Activated CD4-positive, alpha-beta memory T cell treated with anti-CD3 and anti-CD28 coated beads for 36 hours (primary cell): ENCODE measurements at regions of chr16 and their contacts with region 1.

Region 1: DNA sequence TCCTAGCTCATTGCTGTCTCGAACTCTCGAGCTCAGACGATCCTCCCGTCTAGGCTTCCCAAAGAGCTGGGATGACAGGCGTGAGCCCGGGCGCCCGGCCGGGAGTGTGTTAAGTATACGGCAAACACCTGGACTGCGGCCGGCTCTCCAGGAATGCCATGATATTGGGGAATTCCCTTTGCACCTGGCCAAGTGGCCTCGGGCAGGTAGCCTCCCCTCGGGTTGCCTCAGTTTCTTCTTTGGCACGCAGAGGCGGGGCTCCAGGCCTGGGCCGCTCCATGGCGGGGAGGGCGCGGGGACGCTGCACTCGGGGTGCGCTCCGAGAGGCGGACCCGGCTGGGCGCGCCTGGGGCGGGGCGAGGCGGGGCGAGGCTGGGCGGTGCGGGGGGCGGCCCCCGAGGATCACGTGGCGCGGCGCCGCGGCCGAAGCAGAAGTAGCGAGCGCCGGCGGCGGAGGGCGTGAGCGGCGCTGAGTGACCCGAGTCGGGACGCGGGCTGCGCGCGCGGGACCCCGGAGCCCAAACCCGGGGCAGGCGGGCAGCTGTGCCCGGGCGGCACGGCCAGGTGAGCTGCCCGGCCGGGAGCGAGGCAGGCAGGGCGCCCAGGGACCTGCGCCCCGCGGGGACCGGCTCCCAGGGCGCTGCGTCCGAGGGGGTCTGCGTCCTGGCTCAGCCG is at the start of gene PLCG2:
- DNase-seq: peak; percentile 82
- H3K4me3 Mint-ChIP-seq: peak within 1 kb of the TSS; percentile 73
- H3K27ac Mint-ChIP-seq: no peak within 1 kb of the TSS
- H3K4me1 Mint-ChIP-seq: peaks cover 10% of the 10 kb centered on the region
- H3K27me3 Mint-ChIP-seq: peaks cover 36% of the 10 kb centered on the region
- total RNA-seq, gene PLCG2: 8.3 to 10.6 TPM

Region 2: DNA sequence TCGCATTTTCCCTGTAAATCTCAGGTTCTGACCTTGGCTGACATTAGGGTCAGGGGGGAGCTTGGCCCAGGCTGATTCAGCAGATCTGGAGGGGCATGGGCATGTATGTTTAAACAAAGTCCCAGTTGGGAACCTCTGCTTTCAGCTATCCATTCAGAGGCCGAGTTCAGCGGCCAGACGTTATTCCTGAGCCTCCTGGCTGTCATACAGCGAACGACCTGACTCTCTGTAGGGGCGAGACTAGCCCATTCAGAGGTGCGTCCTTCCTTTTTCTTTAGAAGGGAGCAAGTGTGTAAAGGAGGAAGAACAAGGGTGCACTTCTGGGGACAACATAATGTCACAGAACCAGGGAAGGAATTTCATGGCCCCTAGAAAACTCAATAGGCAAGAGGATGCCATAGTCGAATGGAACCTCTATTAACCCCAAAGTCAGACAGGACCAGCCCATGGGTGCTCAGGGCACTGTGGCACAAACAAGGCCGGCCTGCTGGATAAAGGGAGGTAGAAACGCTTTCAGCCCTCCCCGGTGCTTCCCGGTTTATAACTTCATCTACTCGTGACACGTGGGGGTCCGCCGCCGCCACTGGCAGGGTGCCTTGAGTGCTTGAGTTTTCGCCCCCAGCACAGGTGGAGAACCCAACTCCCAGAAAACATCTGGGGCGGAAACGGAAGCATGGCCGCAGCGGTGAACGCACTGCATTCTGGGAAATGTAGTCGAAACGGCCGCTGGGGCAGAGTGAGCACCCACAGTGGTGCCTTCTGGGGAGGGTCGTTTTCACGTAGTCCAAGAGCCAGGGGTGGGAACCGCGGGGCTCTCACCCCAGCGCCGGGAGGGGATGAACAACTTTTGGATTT is 33.1 kb before region 1 on chr16:
- CTCF ChIA-PET with region 1: no interaction called
- POLR2A ChIA-PET with region 1: no interaction called
- intact Hi-C with region 1: loop called (anchors 2 kb)
- DNase-seq: peak; percentile 83
- H3K4me3 Mint-ChIP-seq: peak overlapping the region; percentile 74
- H3K27ac Mint-ChIP-seq: peak overlapping the region; percentile 56
- H3K4me1 Mint-ChIP-seq: peaks cover 20% of the 10 kb centered on the region
- H3K27me3 Mint-ChIP-seq: no peaks in the 10 kb centered on the region

Region 3: GRCh38 chr16:81896900-81897299 is 117.9 kb after region 1 on chr16:
- CTCF ChIA-PET with region 1: no interaction called
- POLR2A ChIA-PET with region 1: no interaction called
- intact Hi-C with region 1: no loop called
- DNase-seq: no peak
- H3K4me3 Mint-ChIP-seq: no peak overlapping the region
- H3K27ac Mint-ChIP-seq: no peak overlapping the region
- H3K4me1 Mint-ChIP-seq: no peaks in the 10 kb centered on the region
- H3K27me3 Mint-ChIP-seq: no peaks in the 10 kb centered on the region